Left cardiac atrium (tissue), 4 donors: ENCODE measurements at regions of chr1 and their contacts with region 1.

Region 1: GRCh38 chr1:112674439-112674985 is at the start of gene MOV10:
- DNase-seq: peak; percentile 83
- ATAC-seq: peak; percentile 64 to 77
- total RNA-seq, gene MOV10: 15.9 to 20.3 TPM

Region 2: GRCh38 chr1:112706908-112707663 is 32.6 kb after region 1 on chr1 and contains the start of gene RHOC:
- intact Hi-C with region 1: loop called in 1 of 2 experiments (anchors 2 kb)
- DNase-seq: peak; percentile 89
- ATAC-seq: peak; percentile 84 to 87
- total RNA-seq, gene RHOC: 146 to 235 TPM

Region 3: DNA sequence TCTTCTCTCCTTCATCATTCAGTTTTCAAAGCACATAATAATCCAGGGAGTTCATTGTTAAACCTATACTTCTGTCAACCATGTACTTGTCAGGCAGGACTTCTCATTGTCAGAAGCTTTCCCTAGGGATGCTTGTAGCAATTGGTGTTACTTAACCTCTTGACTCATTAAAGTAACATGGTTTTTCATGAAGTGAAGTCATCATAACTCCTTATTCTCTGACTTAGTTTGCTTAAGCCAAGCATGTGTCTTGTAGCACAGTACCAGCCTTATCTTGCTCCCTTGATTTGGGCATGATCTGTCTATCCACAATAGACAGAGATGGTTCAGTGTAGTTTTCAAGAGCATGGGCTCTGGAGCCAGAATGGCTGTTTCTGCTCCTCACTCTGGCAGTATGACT is 443.8 kb after region 1 on chr1:
- intact Hi-C with region 1: no loop called
- DNase-seq: no peak
- ATAC-seq: no peak